H1 (cell line): ENCODE measurements at regions of chr17 and their contacts with region 1.

Region 1: DNA sequence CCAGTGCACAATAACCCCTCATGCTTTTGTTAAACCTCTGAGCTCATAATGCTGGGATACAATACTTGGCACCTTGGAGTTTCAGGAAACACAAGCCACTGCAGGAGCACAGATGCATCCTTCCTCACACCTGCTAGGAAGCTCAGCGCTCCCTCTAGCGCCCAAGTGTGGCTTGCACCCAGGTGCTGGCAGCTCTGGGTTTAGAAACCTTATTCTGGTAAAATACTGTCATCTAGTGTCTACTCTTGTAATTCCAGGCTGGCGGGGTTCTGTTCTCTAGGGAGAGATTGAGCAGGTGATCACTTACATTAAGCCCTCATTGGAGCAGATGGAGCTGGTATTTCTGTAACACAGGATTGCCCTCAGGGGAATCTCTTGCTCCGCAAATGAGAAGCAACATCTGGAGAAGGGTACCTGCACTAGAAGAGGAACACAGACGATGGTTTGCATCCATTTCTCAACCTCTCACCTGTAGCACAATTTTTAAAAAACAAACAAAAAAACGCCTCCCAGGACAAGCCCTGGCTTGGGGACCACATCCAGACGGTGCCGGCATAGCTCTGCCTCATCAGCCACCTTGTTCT is 1.5 kb downstream of the CCL1 start:
- DNase-seq: peak; percentile 85 to 95
- H3K4me3 ChIP-seq: no peak overlapping the region
- H3K27ac ChIP-seq: no peak overlapping the region
- H3K4me1 ChIP-seq: no peaks in the 10 kb centered on the region
- H3K27me3 ChIP-seq: no peaks in the 10 kb centered on the region
- CTCF ChIP-seq: peak; percentile 97 to 100 (median 100)
- EP300 ChIP-seq: no peak
- POLR2A ChIP-seq: no peak
- RAD21 ChIP-seq: peak; percentile 100

Region 2: DNA sequence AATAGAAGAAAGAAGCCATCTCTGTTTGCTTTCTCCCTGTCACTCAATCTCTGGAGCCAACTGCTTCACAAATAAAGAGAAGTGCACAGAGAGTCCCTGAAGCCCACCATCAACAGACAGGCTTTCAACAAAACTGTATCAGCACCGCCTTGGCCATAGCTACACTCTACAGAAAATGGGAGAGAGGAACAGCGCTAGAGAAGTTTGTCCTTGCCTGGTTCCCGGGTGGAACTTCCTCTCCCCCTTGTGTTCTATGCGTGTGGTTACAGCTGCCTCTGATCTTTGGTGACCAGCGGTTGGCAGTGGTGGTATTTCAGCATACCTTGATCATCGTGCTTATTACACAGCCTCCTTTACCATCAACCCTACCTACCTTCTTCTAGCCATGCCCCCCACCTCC is 197.9 kb before region 1 on chr17:
- CTCF ChIA-PET with region 1: interaction called, 65 read pairs
- POLR2A ChIA-PET with region 1: no interaction called
- DNase-seq: peak in 1 of 2 experiments; percentile 52
- H3K4me3 ChIP-seq: no peak overlapping the region
- H3K27ac ChIP-seq: no peak overlapping the region
- H3K4me1 ChIP-seq: peaks cover 0 to 3% (median 0%) of the 10 kb centered on the region in 4 experiments; a peak in 1 of 7 replicates
- H3K27me3 ChIP-seq: no peaks in the 10 kb centered on the region
- CTCF ChIP-seq: peak; percentile 81 to 85 (median 83)
- EP300 ChIP-seq: no peak
- POLR2A ChIP-seq: no peak
- RAD21 ChIP-seq: peak; percentile 94

Region 3: GRCh38 chr17:34199932-34200534 is 161.5 kb before region 1 on chr17:
- CTCF ChIA-PET with region 1: interaction called, 442 read pairs
- POLR2A ChIA-PET with region 1: interaction called, 5 read pairs
- DNase-seq: peak; percentile 62 to 85
- H3K4me3 ChIP-seq: no peak overlapping the region
- H3K27ac ChIP-seq: no peak overlapping the region
- H3K4me1 ChIP-seq: peaks cover 0 to 2% (median 0%) of the 10 kb centered on the region in 4 experiments; a peak in 3 of 7 replicates
- H3K27me3 ChIP-seq: no peaks in the 10 kb centered on the region; a peak in 1 of 7 replicates
- CTCF ChIP-seq: peak; percentile 51 to 100 (median 100)
- EP300 ChIP-seq: no peak
- POLR2A ChIP-seq: no peak
- RAD21 ChIP-seq: peak; percentile 99 to 100

Region 4: DNA sequence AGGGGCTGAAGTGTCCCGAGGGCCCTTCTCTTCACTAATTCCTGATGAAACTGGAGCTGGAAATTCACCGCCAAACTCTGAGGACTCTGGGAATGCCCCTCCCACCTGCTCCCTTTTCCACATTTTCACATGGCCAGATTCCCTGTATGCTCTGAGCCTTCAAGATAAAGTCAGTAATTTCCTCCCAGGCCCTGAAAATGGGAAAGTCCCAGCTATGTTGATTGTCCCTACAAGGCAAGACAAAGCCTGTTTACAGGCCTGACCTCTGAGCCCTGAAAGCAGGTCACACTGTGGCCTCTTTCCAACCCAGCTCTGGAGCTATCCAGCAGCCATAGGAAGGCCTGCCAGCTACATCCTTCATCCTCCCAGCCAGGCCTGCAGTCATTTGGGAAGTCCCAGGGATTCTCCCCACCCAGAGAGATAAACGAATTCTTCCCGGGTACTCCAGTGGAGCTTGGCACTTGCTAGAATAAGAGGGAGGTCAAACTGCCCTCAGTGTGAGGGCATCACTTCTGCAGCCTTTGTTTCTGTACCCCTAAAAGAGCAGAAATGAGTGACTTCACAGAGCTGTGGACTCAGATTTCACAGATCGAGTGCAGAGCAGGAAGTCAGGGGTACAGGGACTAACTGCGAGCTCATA is 126.1 kb before region 1 on chr17:
- CTCF ChIA-PET with region 1: interaction called, 14 read pairs
- POLR2A ChIA-PET with region 1: no interaction called
- DNase-seq: no peak
- H3K4me3 ChIP-seq: no peak overlapping the region
- H3K27ac ChIP-seq: no peak overlapping the region
- H3K4me1 ChIP-seq: peaks cover 0 to 2% (median 0%) of the 10 kb centered on the region in 4 experiments; a peak in 1 of 7 replicates
- H3K27me3 ChIP-seq: no peaks in the 10 kb centered on the region
- CTCF ChIP-seq: no peak
- EP300 ChIP-seq: no peak
- POLR2A ChIP-seq: no peak
- RAD21 ChIP-seq: no peak

Region 5: GRCh38 chr17:34306466-34306865 is 55.1 kb before region 1 on chr17:
- CTCF ChIA-PET with region 1: interaction called, 136 read pairs
- POLR2A ChIA-PET with region 1: no interaction called
- DNase-seq: peak; percentile 19 to 51
- H3K4me3 ChIP-seq: no peak overlapping the region
- H3K27ac ChIP-seq: no peak overlapping the region
- H3K4me1 ChIP-seq: no peaks in the 10 kb centered on the region
- H3K27me3 ChIP-seq: no peaks in the 10 kb centered on the region
- CTCF ChIP-seq: peak in 2 of 3 experiments; percentile 79 to 91; a peak in 3 of 4 replicates
- EP300 ChIP-seq: no peak
- POLR2A ChIP-seq: no peak
- RAD21 ChIP-seq: peak; percentile 90 to 93

Region 6: GRCh38 chr17:34386697-34387550 is 25.4 kb after region 1 on chr17:
- CTCF ChIA-PET with region 1: interaction called, 30 read pairs
- POLR2A ChIA-PET with region 1: no interaction called
- DNase-seq: no peak
- H3K4me3 ChIP-seq: no peak overlapping the region
- H3K27ac ChIP-seq: no peak overlapping the region
- H3K4me1 ChIP-seq: no peaks in the 10 kb centered on the region
- H3K27me3 ChIP-seq: no peaks in the 10 kb centered on the region; a peak in 1 of 7 replicates
- CTCF ChIP-seq: no peak
- EP300 ChIP-seq: no peak
- POLR2A ChIP-seq: no peak
- RAD21 ChIP-seq: no peak